ENCODE measurements at regions of chr7 and their contacts with region 1.

Region 1: DNA sequence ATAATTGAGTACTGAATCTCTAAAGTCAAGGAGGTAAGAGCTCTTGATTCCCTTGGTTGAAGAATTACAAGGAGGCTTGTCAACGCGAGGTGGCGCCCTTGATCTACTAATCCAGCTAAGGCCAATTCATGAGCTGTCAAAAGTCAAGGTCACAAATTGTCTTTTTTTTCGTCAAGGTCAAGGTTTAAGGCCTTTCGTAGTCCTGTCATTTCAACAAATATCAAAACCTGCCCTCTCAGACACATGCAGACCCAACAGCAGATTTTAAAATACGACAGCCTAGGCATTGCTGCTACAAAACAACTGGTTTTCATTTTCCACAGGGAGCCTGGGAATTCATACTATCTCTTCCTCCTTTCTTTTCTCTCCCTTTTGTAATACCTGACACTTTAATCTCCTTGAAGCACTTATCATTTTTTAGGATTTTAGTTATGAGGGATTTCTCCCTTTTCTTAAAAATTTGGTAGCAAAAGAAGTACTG is 3.6 kb downstream of the HOXA13 start:
- DNase-seq: peak; percentile 69 to 94 (median 88)

Region 2: DNA sequence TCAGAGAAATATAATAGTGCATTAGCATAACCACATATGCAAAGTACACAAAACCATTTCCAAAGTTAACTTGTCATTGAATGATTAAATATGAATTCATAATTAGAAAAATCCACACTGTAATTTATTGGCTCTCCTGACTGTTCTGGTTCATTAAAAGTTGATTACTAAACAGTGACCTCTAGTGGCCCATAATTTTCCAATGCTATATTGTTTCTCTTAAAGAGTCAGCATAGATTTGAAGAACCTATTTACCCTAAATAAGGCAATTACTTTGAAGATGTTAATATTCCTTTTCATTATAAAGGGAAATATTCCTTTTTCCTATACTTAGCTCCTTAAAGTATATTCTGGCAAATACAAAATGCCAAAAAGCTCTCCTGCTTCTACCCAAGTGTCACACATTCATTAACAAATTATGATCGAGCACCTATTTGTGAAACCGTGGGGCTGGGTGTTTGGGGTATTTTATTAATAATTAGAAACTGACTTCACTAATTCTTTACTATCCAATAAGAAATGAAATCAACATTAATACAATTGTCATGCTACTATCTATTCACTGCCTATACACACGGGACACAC is 380.1 kb after region 1 on chr7:
- intact Hi-C with region 1: loop called (anchors 10 kb)
- DNase-seq: no peak

Region 3: GRCh38 chr7:27921081-27921836 is 724.9 kb after region 1 on chr7:
- intact Hi-C with region 1: loop called (anchors 5 kb)
- DNase-seq: peak in 15 of 42 donors; percentile 15 to 74 (median 45)

Measured in head of caudate nucleus (tissue), 42 donors.